Ovary (tissue), 10 donors: ENCODE measurements at regions of chr1 and their contacts with region 1.

Region 1: DNA sequence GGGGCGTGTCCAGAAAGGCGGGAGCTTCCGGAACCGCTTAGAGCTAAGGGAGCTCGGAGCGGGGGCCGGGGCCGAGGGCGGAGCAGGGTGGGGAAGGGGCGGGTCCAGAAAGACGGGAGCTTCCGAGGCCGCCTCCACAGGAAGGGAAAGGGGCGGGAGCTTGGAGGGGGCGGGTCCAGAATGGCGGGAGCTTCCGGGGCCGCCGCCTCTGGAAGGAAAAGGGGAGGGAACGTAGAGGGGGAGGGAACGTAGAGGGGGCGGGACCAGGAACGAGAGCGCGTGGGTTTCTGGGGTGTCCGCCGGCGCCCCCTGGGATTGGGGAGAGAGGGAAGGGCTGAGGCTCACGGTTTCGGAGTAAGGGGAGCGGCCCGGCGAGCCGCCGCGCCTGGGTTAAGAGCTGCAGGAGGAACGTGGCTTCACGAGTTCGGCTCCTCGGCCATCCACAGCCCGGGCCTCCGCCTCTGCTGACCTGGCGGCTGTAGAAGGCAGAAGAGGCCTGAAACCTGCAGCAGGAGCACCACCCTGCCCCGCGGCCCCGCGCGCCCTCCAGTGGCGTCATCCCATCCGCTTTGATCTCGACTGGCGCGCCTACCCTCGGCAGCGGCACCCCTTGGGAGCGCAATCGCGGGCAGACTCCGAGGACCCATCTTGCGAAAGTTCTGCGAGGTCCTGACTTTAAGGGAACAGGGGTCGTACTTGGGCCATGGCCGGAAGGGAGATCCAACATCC is 22.9 kb upstream of the HPDL start:
- DNase-seq: peak; percentile 99
- H3K4me3 ChIP-seq: peak overlapping the region; percentile 93
- H3K27ac ChIP-seq: peak overlapping the region; percentile 81 to 88
- H3K4me1 ChIP-seq: no peaks in the 10 kb centered on the region
- H3K27me3 ChIP-seq: no peaks in the 10 kb centered on the region
- CTCF ChIP-seq: peak; percentile 68 to 94 (median 91)
- EP300 ChIP-seq: no peak
- POLR2A ChIP-seq: peak; percentile 79

Region 2: GRCh38 chr1:44730741-44731512 is 572.8 kb before region 1 on chr1 and contains the start of gene RNU5D-1:
- intact Hi-C with region 1: loop called in 1 of 4 experiments (anchors 5 kb)
- DNase-seq: peak; percentile 92 to 97 (median 95)
- H3K4me3 ChIP-seq: peak within 1 kb of the TSS; percentile 6
- H3K27ac ChIP-seq: peak within 1 kb of the TSS; percentile 79 to 86
- H3K4me1 ChIP-seq: no peaks in the 10 kb centered on the region
- H3K27me3 ChIP-seq: no peaks in the 10 kb centered on the region
- CTCF ChIP-seq: peak; percentile 59 to 89 (median 83)
- EP300 ChIP-seq: no peak
- POLR2A ChIP-seq: peak; percentile 63
- total RNA-seq, gene RNU5D-1: not detected

Region 3: GRCh38 chr1:44786138-44786840 is 517.5 kb before region 1 on chr1:
- intact Hi-C with region 1: loop called in 1 of 4 experiments (anchors 5 kb)
- DNase-seq: peak; percentile 79 to 85 (median 84)
- H3K4me3 ChIP-seq: peak overlapping the region; percentile 38
- H3K27ac ChIP-seq: peak overlapping the region; percentile 66 to 80
- H3K4me1 ChIP-seq: peaks cover 5% of the 10 kb centered on the region
- H3K27me3 ChIP-seq: no peaks in the 10 kb centered on the region
- CTCF ChIP-seq: peak; percentile 97 to 99 (median 99)
- EP300 ChIP-seq: no peak
- POLR2A ChIP-seq: no peak

Region 4: DNA sequence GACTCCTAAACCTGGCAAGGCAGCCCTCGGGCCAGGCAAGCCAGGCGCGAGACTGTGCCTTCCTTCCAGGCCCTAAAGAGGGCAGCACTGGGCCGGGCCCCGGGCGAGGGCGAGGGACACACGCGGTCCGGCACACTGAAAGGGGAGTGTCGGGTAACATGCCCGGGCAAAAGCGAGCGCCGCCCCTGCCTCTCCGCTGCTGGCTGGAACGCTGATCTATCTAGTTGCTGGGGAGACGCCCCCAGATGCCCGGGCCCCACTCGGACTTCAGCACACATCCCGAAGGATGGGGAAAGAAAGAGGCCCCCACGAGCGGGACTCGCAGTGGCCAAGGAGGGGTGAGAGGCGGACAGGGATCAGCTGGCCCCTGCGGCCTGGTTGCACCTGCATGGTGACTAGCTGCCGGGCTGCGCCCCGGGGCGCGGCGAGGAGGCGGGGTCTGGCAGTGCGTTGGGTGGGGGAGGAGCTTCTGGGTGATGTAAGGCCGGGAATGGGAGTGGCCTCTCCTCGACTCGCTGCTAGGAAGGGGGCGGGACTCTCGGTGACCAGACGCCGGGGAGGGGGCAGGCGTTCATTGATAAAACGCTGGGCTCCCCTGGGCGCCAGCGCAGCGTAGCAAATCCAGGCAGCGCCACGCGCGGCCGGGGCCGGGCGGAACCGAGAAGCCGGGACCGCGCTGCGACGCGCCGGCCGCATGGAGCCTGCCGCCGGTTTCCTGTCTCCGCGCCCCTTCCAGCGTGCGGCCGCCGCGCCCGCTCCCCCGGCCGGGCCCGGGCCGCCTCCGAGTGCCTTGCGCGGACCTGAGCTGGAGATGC is 503.8 kb before region 1 on chr1 and contains the start of gene PLK3:
- intact Hi-C with region 1: loop called in 1 of 4 experiments (anchors 10 kb)
- DNase-seq: peak; percentile 97 to 99 (median 98)
- H3K4me3 ChIP-seq: peak within 1 kb of the TSS; percentile 69
- H3K27ac ChIP-seq: peak within 1 kb of the TSS; percentile 75 to 90
- H3K4me1 ChIP-seq: peaks cover 10% of the 10 kb centered on the region
- H3K27me3 ChIP-seq: no peaks in the 10 kb centered on the region
- CTCF ChIP-seq: peak; percentile 89 to 94 (median 94)
- EP300 ChIP-seq: no peak
- POLR2A ChIP-seq: peak; percentile 97
- total RNA-seq, gene PLK3: 12.3 to 68.6 (median 25.2) TPM

Region 5: GRCh38 chr1:44835738-44836675 is 467.7 kb before region 1 on chr1:
- intact Hi-C with region 1: loop called in 1 of 4 experiments (anchors 5 kb)
- DNase-seq: peak; percentile 88 to 94 (median 92)
- H3K4me3 ChIP-seq: no peak overlapping the region
- H3K27ac ChIP-seq: peak overlapping the region in 1 of 2 donors; percentile 27
- H3K4me1 ChIP-seq: peaks cover 3% of the 10 kb centered on the region
- H3K27me3 ChIP-seq: no peaks in the 10 kb centered on the region
- CTCF ChIP-seq: peak; percentile 64 to 87 (median 67)
- EP300 ChIP-seq: no peak
- POLR2A ChIP-seq: no peak

Region 6: DNA sequence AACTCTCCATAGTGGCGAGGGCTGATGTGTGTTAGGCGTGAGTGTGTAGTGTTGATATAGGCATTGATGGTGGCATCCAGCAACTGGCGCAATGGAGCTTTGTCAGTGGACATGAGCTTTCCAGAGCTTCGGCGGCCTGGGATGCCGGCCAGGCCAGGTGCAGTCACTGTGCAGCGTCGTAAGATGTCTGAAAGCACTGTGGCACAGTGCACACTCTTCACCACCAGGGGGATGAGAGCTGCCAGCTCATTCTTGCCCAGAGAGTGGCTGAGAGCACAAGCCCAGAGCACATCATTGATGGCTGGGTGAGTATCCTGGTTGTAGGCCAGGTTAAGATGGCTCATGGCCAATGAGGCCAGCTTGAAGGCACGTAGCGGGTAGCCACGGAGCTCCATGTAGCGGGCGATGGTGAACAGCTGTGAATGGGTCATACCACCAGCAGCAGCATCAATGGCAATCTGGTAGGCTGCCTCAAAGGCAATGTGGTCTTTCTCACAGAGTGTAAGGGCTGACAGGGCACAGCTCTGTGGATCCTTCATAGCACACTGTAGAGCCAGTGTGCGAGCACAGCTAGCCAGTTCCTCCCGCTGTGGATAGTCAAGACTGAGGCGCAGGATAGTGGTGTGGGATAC is 285.0 kb before region 1 on chr1:
- intact Hi-C with region 1: loop called (anchors 1 to 5 kb)
- DNase-seq: peak in 3 of 5 donors; percentile 42 to 60 (median 44)
- H3K4me3 ChIP-seq: no peak overlapping the region
- H3K27ac ChIP-seq: no peak overlapping the region
- H3K4me1 ChIP-seq: peaks cover 2% of the 10 kb centered on the region
- H3K27me3 ChIP-seq: no peaks in the 10 kb centered on the region
- CTCF ChIP-seq: peak in 2 of 3 donors; percentile 25 to 37
- EP300 ChIP-seq: no peak
- POLR2A ChIP-seq: no peak